ENCODE measurements at regions of chr16 and their contacts with region 1.

Region 1: GRCh38 chr16:714558-715476 is at the start of gene METRN:
- DNase-seq: peak; percentile 87 to 97 (median 92)
- H3K4me3 ChIP-seq: peak within 1 kb of the TSS; percentile 48 to 88 (median 75)
- H3K27ac ChIP-seq: peak within 1 kb of the TSS in 58 of 59 donors; percentile 72 to 99 (median 95)
- H3K27me3 ChIP-seq: peaks cover 0 to 10% (median 0%) of the 10 kb centered on the region in 45 donors
- CTCF ChIP-seq: peak in 10 of 56 donors; percentile 6 to 42 (median 20)
- total RNA-seq, gene METRN: 84.0 to 448 (median 154) TPM

Region 2: GRCh38 chr16:667780-668518 is 46.9 kb before region 1 on chr16 and contains the start of gene RHOT2:
- intact Hi-C with region 1: loop called in 1 of 2 experiments (anchors 5 kb)
- DNase-seq: peak; percentile 85 to 97 (median 91)
- H3K4me3 ChIP-seq: peak within 1 kb of the TSS; percentile 57 to 99 (median 93)
- H3K27ac ChIP-seq: peak within 1 kb of the TSS; percentile 40 to 96 (median 89)
- H3K27me3 ChIP-seq: no peaks in the 10 kb centered on the region
- CTCF ChIP-seq: peak; percentile 36 to 98 (median 90)
- total RNA-seq, gene RHOT2: 69.8 to 145 (median 101) TPM

Region 3: GRCh38 chr16:740764-741505 is 26.1 kb after region 1 on chr16 and contains the start of gene CIAO3:
- intact Hi-C with region 1: loop called in 1 of 2 experiments (anchors 1 kb)
- DNase-seq: peak; percentile 73 to 90 (median 86)
- H3K4me3 ChIP-seq: peak within 1 kb of the TSS; percentile 69 to 99 (median 94)
- H3K27ac ChIP-seq: peak within 1 kb of the TSS in 53 of 59 donors; percentile 19 to 91 (median 74)
- H3K27me3 ChIP-seq: no peaks in the 10 kb centered on the region
- CTCF ChIP-seq: peak; percentile 86 to 100 (median 99)
- total RNA-seq, gene CIAO3: 32.4 to 98.2 (median 48.8) TPM

Region 4: DNA sequence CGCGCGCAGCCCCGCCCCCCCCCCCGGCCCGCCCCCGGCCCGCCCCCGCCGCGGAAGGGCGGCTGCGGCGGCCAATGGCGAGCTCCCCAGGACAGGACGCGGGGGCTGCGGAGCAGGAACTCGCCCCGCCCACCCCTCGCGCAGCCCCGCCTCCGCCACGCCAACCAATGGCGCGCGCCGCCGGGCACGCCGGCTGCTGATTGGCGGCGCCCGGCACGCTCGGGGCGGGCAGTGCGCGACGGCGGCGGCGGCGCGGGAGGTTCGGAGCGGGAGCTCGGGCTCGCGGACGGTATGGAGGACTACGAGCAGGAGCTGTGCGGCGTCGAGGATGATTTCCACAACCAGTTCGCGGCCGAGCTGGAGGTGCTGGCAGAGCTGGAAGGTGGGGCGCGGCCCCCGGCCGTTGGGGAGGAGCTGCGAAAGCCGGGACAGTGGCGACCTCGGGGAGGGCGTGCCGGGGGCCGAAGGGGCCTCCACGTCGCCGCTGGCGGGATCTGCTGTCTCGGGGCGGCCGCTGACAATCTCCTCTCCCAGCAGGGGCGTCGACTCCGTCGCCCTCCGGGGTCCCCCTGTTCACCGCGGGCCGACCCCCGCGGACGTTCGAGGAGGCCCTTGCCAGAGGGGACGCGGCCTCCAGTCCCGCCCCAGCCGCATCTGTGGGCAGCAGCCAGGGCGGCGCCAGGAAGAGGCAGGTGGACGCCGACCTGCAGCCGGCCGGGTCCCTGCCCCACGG is 73.7 kb after region 1 on chr16 and contains the start of gene CHTF18:
- intact Hi-C with region 1: loop called (anchors 1 to 2 kb)
- DNase-seq: peak; percentile 77 to 97 (median 88)
- H3K4me3 ChIP-seq: peak within 1 kb of the TSS; percentile 72 to 99 (median 88)
- H3K27ac ChIP-seq: peak within 1 kb of the TSS in 41 of 59 donors; percentile 26 to 87 (median 66)
- H3K27me3 ChIP-seq: no peaks in the 10 kb centered on the region
- CTCF ChIP-seq: peak in 2 of 56 donors; percentile 5 to 8
- total RNA-seq, gene CHTF18: 9.5 to 68.5 (median 17.6) TPM

Region 5: DNA sequence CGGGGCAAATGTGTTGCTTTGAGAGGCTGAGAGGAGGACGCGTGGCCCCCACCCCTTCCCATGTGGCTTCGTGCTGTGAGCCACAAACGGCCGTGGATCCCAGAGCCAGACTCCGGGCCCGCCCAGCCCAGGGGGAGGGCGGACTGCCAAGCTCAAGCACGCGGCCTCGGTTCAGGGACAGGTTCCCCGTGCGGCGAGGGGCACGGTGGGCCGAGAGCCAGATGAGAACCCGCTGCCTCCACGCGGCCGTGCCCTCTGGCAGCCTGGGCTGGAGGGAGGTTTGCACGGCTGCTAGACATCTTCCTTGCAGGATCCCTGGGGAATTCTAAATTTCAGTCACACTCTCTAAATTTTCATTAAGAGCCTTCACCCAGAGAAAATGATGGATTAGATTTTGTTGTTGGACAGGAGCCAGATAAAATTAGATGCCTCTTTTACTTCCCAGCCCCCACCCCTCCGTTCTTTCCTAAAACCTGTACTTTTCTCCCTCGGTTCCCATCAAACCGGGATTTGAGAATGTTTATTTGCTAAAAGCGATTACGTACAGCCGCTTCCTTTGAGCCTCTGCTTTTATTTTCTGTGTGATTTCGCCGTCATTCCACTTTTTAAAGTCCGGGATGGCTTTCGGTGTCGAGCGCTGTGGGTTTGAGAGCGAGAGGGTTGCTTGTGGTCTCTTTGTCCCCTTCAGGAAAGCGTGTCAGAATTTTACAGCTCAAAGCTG is 110.7 kb after region 1 on chr16:
- intact Hi-C with region 1: no loop called
- DNase-seq: peak in 7 of 10 donors; percentile 50 to 78 (median 67)
- H3K4me3 ChIP-seq: peak overlapping the region in 54 of 59 donors; percentile 1 to 58 (median 36)
- H3K27ac ChIP-seq: peak overlapping the region in 3 of 59 donors; percentile 39 to 57 (median 44)
- H3K27me3 ChIP-seq: peaks cover 0 to 21% (median 0%) of the 10 kb centered on the region in 45 donors
- CTCF ChIP-seq: peak in 1 of 56 donors; percentile 15

Region 6: DNA sequence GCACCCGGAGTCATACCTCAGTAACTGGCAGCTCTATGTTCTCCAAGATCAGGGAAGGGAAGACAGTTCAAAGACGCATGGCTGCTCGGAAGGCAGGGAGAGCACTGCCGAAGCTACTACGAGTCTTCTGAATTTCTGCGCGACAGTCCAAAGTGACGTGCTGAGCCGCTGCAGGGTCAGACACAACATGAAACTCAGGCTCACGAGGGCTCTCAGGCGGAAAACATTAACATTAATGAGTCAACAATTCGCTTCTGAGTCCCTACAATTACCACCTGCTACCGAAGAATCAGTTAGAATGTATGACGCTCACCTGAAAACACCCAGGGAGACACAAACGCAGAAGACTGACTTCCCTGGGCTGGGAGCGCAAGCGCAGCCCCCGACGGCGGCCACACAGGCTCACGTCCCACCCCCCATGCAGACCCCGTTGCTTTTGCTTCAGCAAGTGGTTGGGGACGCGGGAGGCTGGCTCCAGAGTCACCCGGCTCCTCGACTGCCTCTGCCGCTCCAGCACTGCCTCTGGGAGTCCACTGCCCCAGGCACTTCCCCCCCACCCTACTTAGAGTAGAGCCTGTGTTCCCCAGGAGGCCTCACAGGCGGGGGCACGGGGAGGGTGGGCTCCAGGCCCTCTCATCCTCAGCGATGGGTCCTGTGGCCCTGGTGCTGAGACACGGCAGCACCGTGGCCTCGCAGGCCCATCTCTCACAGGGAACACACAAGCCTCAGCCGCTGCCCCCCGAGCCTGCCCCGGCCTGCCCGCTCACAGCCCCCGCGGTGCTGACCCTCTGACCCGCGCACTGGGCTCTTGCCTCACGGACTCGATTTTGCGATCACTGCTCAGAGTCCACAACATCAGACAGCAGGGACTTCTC is 217.0 kb after region 1 on chr16:
- intact Hi-C with region 1: no loop called
- DNase-seq: peak in 1 of 10 donors; percentile 16
- H3K4me3 ChIP-seq: no peak overlapping the region
- H3K27ac ChIP-seq: no peak overlapping the region
- H3K27me3 ChIP-seq: no peaks in the 10 kb centered on the region
- CTCF ChIP-seq: no peak

Region 7: GRCh38 chr16:969508-970378 is 254.9 kb after region 1 on chr16:
- intact Hi-C with region 1: loop called in 1 of 2 experiments (anchors 10 kb)
- DNase-seq: peak in 2 of 10 donors; percentile 49 to 56
- H3K4me3 ChIP-seq: peak overlapping the region; percentile 60 to 96 (median 88)
- H3K27ac ChIP-seq: peak overlapping the region in 57 of 59 donors; percentile 38 to 100 (median 98)
- H3K27me3 ChIP-seq: no peaks in the 10 kb centered on the region
- CTCF ChIP-seq: no peak

Measured in dorsolateral prefrontal cortex (tissue), 120 donors.